ENCODE measurements at regions of chr6 and their contacts with region 1.

Region 1: GRCh38 chr6:42726485-42727086 is 4.2 kb upstream of the PRPH2 start:
- DNase-seq: peak; percentile 32 to 94 (median 71)
- ATAC-seq: peak; percentile 95 to 97 (median 96)
- H3K4me3 ChIP-seq: peak overlapping the region; percentile 57 to 82
- H3K4me3 Mint-ChIP-seq: peak overlapping the region; percentile 82 to 94 (median 84)
- H3K27ac ChIP-seq: peak overlapping the region; percentile 73
- H3K27ac Mint-ChIP-seq: peak overlapping the region; percentile 95 to 99
- H3K4me1 ChIP-seq: peaks cover 0 to 17% of the 10 kb centered on the region in 2 experiments
- H3K4me1 Mint-ChIP-seq: peaks cover 20 to 23% (median 21%) of the 10 kb centered on the region in 3 donors
- H3K27me3 ChIP-seq: peaks cover 0 to 6% of the 10 kb centered on the region in 2 experiments
- H3K27me3 Mint-ChIP-seq: peaks cover 0 to 3% of the 10 kb centered on the region in 2 donors

Region 2: GRCh38 chr6:42610416-42610815 is 116.2 kb before region 1 on chr6:
- CTCF ChIA-PET with region 1: no interaction called
- POLR2A ChIA-PET with region 1: interaction called in 1 of 2 experiments, 10 read pairs
- DNase-seq: no peak
- ATAC-seq: no peak
- H3K4me3 ChIP-seq: no peak overlapping the region
- H3K4me3 Mint-ChIP-seq: no peak overlapping the region
- H3K27ac ChIP-seq: no peak overlapping the region
- H3K27ac Mint-ChIP-seq: no peak overlapping the region
- H3K4me1 ChIP-seq: no peaks in the 10 kb centered on the region
- H3K4me1 Mint-ChIP-seq: no peaks in the 10 kb centered on the region
- H3K27me3 ChIP-seq: no peaks in the 10 kb centered on the region
- H3K27me3 Mint-ChIP-seq: no peaks in the 10 kb centered on the region

Region 3: DNA sequence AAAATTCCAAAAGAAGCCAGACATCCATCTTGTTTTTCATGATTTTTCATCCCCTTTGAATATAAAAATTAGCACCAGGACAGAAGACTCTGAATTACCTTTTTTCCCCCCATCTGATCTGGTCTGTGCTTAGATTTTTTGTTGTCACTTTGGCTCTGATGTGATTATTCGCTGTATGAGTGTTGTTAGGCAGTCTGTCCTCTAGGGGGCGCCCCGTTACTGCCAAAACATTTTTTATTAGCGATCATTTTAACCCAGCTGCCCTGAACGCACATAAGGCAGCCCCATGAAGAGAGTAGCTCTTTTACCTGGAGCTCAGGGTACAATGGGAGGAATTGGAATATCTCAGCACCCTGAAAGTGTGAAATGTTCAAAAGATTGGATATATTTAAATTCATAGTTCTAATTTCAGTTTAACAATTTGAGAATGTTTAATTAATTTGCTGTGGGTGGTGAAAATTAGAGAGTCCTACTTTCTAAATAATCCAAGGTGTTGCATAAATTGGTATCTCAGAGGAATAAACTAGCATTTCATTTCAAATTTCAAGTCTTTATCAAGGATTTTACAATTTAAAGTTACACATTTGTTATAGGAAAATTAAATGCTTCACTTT is 64.9 kb before region 1 on chr6:
- CTCF ChIA-PET with region 1: interaction called, 3 to 34 read pairs
- POLR2A ChIA-PET with region 1: no interaction called
- DNase-seq: peak; percentile 66 to 89 (median 83)
- ATAC-seq: peak; percentile 87 to 96 (median 91)
- H3K4me3 ChIP-seq: no peak overlapping the region
- H3K4me3 Mint-ChIP-seq: no peak overlapping the region
- H3K27ac ChIP-seq: no peak overlapping the region
- H3K27ac Mint-ChIP-seq: peak overlapping the region; percentile 5 to 12
- H3K4me1 ChIP-seq: peaks cover 0 to 2% of the 10 kb centered on the region in 2 experiments
- H3K4me1 Mint-ChIP-seq: peaks cover 0 to 3% (median 0%) of the 10 kb centered on the region in 3 donors
- H3K27me3 ChIP-seq: no peaks in the 10 kb centered on the region
- H3K27me3 Mint-ChIP-seq: no peaks in the 10 kb centered on the region

Region 4: GRCh38 chr6:42692137-42692911 is 34.3 kb before region 1 on chr6:
- CTCF ChIA-PET with region 1: interaction called, 4 to 12 read pairs
- POLR2A ChIA-PET with region 1: interaction called in 1 of 2 experiments, 7 read pairs
- DNase-seq: no peak
- ATAC-seq: no peak
- H3K4me3 ChIP-seq: no peak overlapping the region
- H3K4me3 Mint-ChIP-seq: peak overlapping the region in 1 of 3 donors; percentile 9
- H3K27ac ChIP-seq: peak overlapping the region; percentile 14
- H3K27ac Mint-ChIP-seq: peak overlapping the region; percentile 85 to 93
- H3K4me1 ChIP-seq: peaks cover 16 to 33% of the 10 kb centered on the region in 2 experiments
- H3K4me1 Mint-ChIP-seq: peaks cover 42 to 57% (median 50%) of the 10 kb centered on the region in 3 donors
- H3K27me3 ChIP-seq: no peaks in the 10 kb centered on the region
- H3K27me3 Mint-ChIP-seq: no peaks in the 10 kb centered on the region

Measured in T-cell (primary cell).